Activated naive CD4-positive, alpha-beta T cell treated with anti-CD3 and anti-CD28 coated beads, Interleukin-2, amount 10 ng/mL, durations not matched to agents 7 days and 5 days (primary cell): ENCODE measurements at regions of chr16 and their contacts with region 1.

Region 1: GRCh38 chr16:82263521-82264143 is 93.6 kb upstream of the MPHOSPH6 start:
- DNase-seq: peak; percentile 56
- H3K4me3 Mint-ChIP-seq: no peak overlapping the region
- H3K27ac Mint-ChIP-seq: no peak overlapping the region
- H3K4me1 Mint-ChIP-seq: no peaks in the 10 kb centered on the region
- H3K27me3 Mint-ChIP-seq: peaks cover 7% of the 10 kb centered on the region

Region 2: GRCh38 chr16:82252582-82252981 is 11.1 kb before region 1 on chr16:
- CTCF ChIA-PET with region 1: interaction called, 10 read pairs
- DNase-seq: no peak
- H3K4me3 Mint-ChIP-seq: no peak overlapping the region
- H3K27ac Mint-ChIP-seq: no peak overlapping the region
- H3K4me1 Mint-ChIP-seq: no peaks in the 10 kb centered on the region
- H3K27me3 Mint-ChIP-seq: peaks cover 3% of the 10 kb centered on the region

Region 3: GRCh38 chr16:82302042-82302727 is 38.6 kb after region 1 on chr16:
- CTCF ChIA-PET with region 1: no interaction called
- DNase-seq: no peak
- H3K4me3 Mint-ChIP-seq: no peak overlapping the region
- H3K27ac Mint-ChIP-seq: no peak overlapping the region
- H3K4me1 Mint-ChIP-seq: no peaks in the 10 kb centered on the region
- H3K27me3 Mint-ChIP-seq: no peaks in the 10 kb centered on the region

Region 4: GRCh38 chr16:82379551-82379950 is 115.9 kb after region 1 on chr16:
- CTCF ChIA-PET with region 1: no interaction called
- DNase-seq: no peak
- H3K4me3 Mint-ChIP-seq: no peak overlapping the region
- H3K27ac Mint-ChIP-seq: no peak overlapping the region
- H3K4me1 Mint-ChIP-seq: no peaks in the 10 kb centered on the region
- H3K27me3 Mint-ChIP-seq: no peaks in the 10 kb centered on the region

Region 5: GRCh38 chr16:82456683-82457082 is 193.1 kb after region 1 on chr16:
- CTCF ChIA-PET with region 1: interaction called, 27 read pairs
- DNase-seq: peak; percentile 46
- H3K4me3 Mint-ChIP-seq: no peak overlapping the region
- H3K27ac Mint-ChIP-seq: no peak overlapping the region
- H3K4me1 Mint-ChIP-seq: no peaks in the 10 kb centered on the region
- H3K27me3 Mint-ChIP-seq: peaks cover 9% of the 10 kb centered on the region

Region 6: DNA sequence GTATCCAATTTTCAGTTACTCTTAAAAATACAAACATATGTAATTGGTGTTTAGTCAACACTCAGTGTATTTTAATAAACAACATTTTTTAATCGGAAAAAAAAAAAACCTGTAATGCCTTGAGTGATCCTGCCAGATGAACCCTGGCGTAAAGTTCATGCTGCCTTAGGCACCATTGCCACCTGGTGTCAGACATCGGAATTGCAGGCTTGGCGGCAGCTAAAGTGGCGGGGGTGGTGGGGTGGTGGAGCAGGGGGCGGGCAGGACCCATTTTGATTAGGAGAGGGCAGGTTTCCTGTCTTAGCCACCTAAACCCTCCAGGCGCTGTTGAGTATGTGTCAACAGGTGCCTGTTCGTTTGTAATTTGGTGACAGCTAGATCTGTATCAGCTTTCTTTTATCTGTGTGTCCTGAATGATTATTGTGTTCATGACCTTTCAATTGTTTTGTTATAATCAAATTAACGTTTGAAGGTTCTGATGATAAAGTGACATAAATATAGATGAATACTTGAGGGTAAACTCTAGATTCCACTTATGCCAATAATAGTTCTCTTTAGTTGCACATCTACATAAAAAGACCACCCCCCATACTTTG is 951.9 kb after region 1 on chr16:
- CTCF ChIA-PET with region 1: interaction called, 15 read pairs
- DNase-seq: peak; percentile 52
- H3K4me3 Mint-ChIP-seq: no peak overlapping the region
- H3K27ac Mint-ChIP-seq: no peak overlapping the region
- H3K4me1 Mint-ChIP-seq: no peaks in the 10 kb centered on the region
- H3K27me3 Mint-ChIP-seq: no peaks in the 10 kb centered on the region